Heart left ventricle (tissue), 16 donors: ENCODE measurements at regions of chr11 and their contacts with region 1.

Region 1: GRCh38 chr11:71500601-71501021 is 26.5 kb upstream of the KRTAP5-7 start:
- DNase-seq: peak in 4 of 5 donors; percentile 50 to 70 (median 53)
- ATAC-seq: peak; percentile 80 to 90 (median 86)
- H3K4me3 ChIP-seq: no peak overlapping the region
- H3K27ac ChIP-seq: no peak overlapping the region
- H3K4me1 ChIP-seq: peaks cover 0 to 21% (median 3%) of the 10 kb centered on the region in 12 donors
- H3K27me3 ChIP-seq: no peaks in the 10 kb centered on the region
- CTCF ChIP-seq: no peak
- POLR2A ChIP-seq: no peak

Region 2: DNA sequence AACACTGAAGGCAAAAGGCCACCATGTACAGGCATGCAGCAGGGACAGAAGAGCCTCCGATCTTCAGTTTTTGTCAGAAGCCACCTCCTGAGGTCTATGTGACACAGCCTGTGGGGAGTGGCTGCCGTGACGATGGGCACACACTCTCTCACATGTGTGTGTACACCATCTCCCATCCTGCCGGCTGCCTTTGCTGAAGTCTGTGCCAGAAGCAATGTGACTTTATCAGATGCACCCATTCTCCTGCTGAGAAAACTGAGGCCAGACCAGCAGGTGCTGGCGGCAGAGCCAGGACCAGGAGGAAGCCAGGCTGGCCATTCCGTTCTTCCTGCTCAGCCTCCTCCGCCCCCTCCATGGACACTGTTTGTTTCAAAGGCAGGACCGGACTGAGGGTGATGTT is 264.9 kb before region 1 on chr11:
- intact Hi-C with region 1: no loop called
- DNase-seq: no peak
- ATAC-seq: no peak
- H3K4me3 ChIP-seq: no peak overlapping the region
- H3K27ac ChIP-seq: no peak overlapping the region
- H3K4me1 ChIP-seq: peaks cover 0 to 2% (median 0%) of the 10 kb centered on the region in 12 donors
- H3K27me3 ChIP-seq: peaks cover 0 to 28% (median 0%) of the 10 kb centered on the region in 9 donors
- CTCF ChIP-seq: no peak
- POLR2A ChIP-seq: no peak

Region 3: DNA sequence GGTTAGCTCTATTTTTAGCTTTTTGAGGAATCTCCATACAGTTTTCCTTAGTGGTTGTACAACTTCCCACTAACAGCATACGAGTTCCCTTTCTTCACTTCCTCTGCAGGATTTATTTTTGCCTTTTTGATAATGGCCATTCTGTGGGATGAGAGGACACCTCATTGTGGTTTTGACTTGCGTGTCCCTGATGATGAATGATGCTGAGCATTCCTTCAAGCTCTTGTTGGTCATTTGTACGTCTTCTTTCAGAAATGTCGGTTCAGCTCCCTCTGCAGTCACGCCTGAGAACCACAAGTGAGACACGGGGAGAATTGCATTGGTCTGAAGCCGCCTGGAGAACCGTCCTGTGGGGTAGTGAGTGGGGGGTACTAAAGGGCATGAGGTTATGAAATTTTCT is 62.8 kb after region 1 on chr11:
- intact Hi-C with region 1: loop called in 1 of 10 experiments (anchors 10 kb)
- DNase-seq: no peak
- ATAC-seq: peak in 2 of 4 donors; percentile 48 to 55
- H3K4me3 ChIP-seq: no peak overlapping the region
- H3K27ac ChIP-seq: no peak overlapping the region
- H3K4me1 ChIP-seq: no peaks in the 10 kb centered on the region
- H3K27me3 ChIP-seq: peaks cover 0 to 36% (median 8%) of the 10 kb centered on the region in 9 donors
- CTCF ChIP-seq: peak in 9 of 12 donors; percentile 7 to 44 (median 36)
- POLR2A ChIP-seq: no peak